Left colon (tissue), 2 donors: ENCODE measurements at regions of chr18 and their contacts with region 1.

Region 1: GRCh38 chr18:46660955-46661749 is 4.1 kb upstream of the LOXHD1 start:
- DNase-seq: no peak
- ATAC-seq: peak; percentile 35

Region 2: GRCh38 chr18:46148810-46149209 is 512.3 kb before region 1 on chr18:
- intact Hi-C with region 1: loop called in 1 of 2 experiments (anchors 5 kb)
- DNase-seq: peak in 1 of 2 donors; percentile 24
- ATAC-seq: peak; percentile 56

Region 3: DNA sequence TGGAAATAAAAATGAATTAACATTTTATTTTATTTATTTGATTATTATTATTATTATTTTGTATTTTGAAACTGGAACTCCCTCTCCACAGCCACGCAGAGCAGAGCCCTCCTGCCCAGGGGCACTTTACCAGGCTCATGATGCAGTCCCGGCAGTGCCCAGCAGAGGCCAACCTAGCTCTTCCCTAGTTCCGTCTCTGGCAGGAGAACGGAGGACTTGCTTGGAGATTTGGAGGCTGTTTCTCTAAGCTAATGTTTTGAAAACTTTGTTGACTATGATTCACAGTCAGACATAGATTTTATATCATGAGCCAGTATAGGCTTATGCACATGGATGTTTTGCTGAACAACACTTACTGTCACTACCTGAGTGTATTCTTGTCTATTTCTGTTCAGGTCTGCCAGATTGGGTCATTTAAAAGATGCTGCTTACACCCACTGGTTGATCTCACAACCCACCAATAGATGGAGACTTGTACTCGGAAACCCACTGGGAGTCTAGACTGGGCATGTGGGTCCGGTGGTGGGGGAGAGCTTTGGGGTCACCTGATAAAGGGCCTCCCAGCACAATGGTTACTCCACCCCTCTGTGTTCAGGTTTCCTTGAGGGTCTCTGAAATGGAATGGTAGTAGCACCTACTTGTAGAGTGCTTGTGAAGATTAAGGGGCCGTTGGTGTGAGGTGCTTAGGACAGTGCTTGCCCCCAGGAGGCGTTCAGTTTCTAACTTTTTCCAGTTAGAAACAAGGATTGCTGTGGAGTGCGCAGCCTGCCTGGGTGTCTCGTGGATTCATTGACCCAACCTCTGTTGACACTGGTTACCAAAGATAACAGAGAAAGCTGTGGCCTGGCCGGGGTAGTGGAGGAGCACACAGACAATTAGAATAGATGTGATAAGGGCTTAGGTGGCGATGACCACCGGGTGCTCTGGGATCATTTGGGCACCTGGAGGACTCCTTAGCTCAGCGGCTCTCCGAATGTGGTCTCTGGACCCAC is 379.7 kb before region 1 on chr18:
- intact Hi-C with region 1: loop called in 1 of 2 experiments (anchors 5 kb)
- DNase-seq: peak in 1 of 2 donors; percentile 71
- ATAC-seq: peak; percentile 92